Left ventricle myocardium inferior (tissue), 1 donor: ENCODE measurements at regions of chr4 and their contacts with region 1.

Region 1: GRCh38 chr4:61614231-61614630 is 414.1 kb downstream of the ADGRL3 start:
- DNase-seq: no peak
- H3K4me3 ChIP-seq: no peak overlapping the region
- H3K27ac ChIP-seq: no peak overlapping the region
- H3K4me1 ChIP-seq: no peaks in the 10 kb centered on the region
- H3K27me3 ChIP-seq: no peaks in the 10 kb centered on the region
- CTCF ChIP-seq: no peak

Region 2: GRCh38 chr4:61590881-61591280 is 23.4 kb before region 1 on chr4:
- intact Hi-C with region 1: loop called (anchors 2 kb)
- DNase-seq: no peak
- H3K4me3 ChIP-seq: no peak overlapping the region
- H3K27ac ChIP-seq: no peak overlapping the region
- H3K4me1 ChIP-seq: no peaks in the 10 kb centered on the region
- H3K27me3 ChIP-seq: no peaks in the 10 kb centered on the region
- CTCF ChIP-seq: no peak